Mammary epithelial cell (primary cell): ENCODE measurements at regions of chr7 and their contacts with region 1.

Region 1: GRCh38 chr7:74094224-74095101 is 10.9 kb downstream of the LIMK1 start:
- DNase-seq: peak; percentile 94
- H3K4me3 ChIP-seq: peak overlapping the region in 1 of 3 experiments; percentile 22
- H3K27ac ChIP-seq: peak overlapping the region; percentile 54
- H3K4me1 ChIP-seq: peaks cover 47% of the 10 kb centered on the region
- H3K27me3 ChIP-seq: no peaks in the 10 kb centered on the region
- CTCF ChIP-seq: no peak

Region 2: GRCh38 chr7:74083117-74083876 is 11.2 kb before region 1 on chr7 and contains the start of gene LIMK1:
- CTCF ChIA-PET with region 1: no interaction called
- dilution Hi-C with region 1: no loop called
- in situ Hi-C with region 1: no loop called
- intact Hi-C with region 1: loop called (anchors 1 kb)
- DNase-seq: peak; percentile 62
- H3K4me3 ChIP-seq: peak within 1 kb of the TSS; percentile 56 to 94 (median 62)
- H3K27ac ChIP-seq: peak within 1 kb of the TSS; percentile 75
- H3K4me1 ChIP-seq: peaks cover 27% of the 10 kb centered on the region
- H3K27me3 ChIP-seq: no peaks in the 10 kb centered on the region
- CTCF ChIP-seq: no peak
- total RNA-seq, gene LIMK1: 23.8 to 31.0 TPM

Region 3: GRCh38 chr7:74133671-74134048 is 39.2 kb after region 1 on chr7:
- CTCF ChIA-PET with region 1: no interaction called
- dilution Hi-C with region 1: no loop called
- in situ Hi-C with region 1: no loop called
- intact Hi-C with region 1: loop called (anchors 1 kb)
- DNase-seq: peak; percentile 95
- H3K4me3 ChIP-seq: no peak overlapping the region
- H3K27ac ChIP-seq: peak overlapping the region; percentile 33
- H3K4me1 ChIP-seq: peaks cover 13% of the 10 kb centered on the region
- H3K27me3 ChIP-seq: no peaks in the 10 kb centered on the region
- CTCF ChIP-seq: no peak

Region 4: DNA sequence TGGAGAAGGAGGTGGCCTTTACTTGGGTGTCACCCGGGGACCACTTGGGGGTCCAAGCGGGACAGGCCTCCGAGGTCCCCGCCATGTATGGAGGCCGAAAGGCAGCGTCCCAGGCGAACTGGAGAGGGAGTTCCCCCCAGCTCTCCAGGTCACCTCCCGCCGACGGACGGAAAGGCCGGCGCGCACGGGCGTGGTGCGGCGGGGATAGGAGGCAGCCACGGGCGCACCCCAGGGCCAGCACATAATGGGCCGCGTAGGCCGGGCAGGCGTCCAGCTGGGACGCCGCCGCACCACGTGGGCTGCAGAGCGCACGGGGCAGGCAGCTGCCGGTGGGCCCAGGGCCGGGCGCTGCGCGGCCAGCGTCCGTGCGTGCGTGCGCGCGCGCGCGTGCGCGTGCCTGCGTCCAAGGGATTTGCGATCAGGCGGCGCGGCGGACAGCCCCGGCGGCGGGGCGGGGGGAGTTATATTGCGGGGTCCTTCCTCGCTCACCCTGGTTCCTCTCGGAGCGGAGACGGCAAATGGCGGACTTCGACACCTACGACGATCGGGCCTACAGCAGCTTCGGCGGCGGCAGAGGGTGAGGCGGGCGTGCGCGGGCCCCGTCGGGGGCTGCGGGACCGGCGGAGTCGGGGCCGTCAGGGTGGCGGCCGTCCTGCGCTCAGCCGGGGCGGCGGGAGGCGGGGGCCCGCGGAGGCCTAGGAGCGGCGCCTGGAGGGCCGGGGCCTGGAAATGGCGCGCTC is 79.6 kb after region 1 on chr7 and contains the start of gene EIF4H:
- CTCF ChIA-PET with region 1: no interaction called
- dilution Hi-C with region 1: loop called (anchors 5 kb)
- in situ Hi-C with region 1: no loop called
- intact Hi-C with region 1: loop called (anchors 2 kb)
- DNase-seq: peak; percentile 94
- H3K4me3 ChIP-seq: peak within 1 kb of the TSS; percentile 83 to 98 (median 87)
- H3K27ac ChIP-seq: peak within 1 kb of the TSS; percentile 86
- H3K4me1 ChIP-seq: peaks cover 33% of the 10 kb centered on the region
- H3K27me3 ChIP-seq: no peaks in the 10 kb centered on the region
- CTCF ChIP-seq: no peak
- total RNA-seq, gene EIF4H: 252 to 365 TPM

Region 5: GRCh38 chr7:74206589-74207120 is 112.2 kb after region 1 on chr7:
- CTCF ChIA-PET with region 1: interaction called, 20 read pairs
- dilution Hi-C with region 1: no loop called
- in situ Hi-C with region 1: no loop called
- intact Hi-C with region 1: no loop called
- DNase-seq: peak; percentile 52
- H3K4me3 ChIP-seq: peak overlapping the region in 1 of 3 experiments; percentile 20
- H3K27ac ChIP-seq: no peak overlapping the region
- H3K4me1 ChIP-seq: peaks cover 13% of the 10 kb centered on the region
- H3K27me3 ChIP-seq: no peaks in the 10 kb centered on the region
- CTCF ChIP-seq: peak; percentile 76 to 95